ENCODE measurements at regions of chr11 and their contacts with region 1.

Region 1: DNA sequence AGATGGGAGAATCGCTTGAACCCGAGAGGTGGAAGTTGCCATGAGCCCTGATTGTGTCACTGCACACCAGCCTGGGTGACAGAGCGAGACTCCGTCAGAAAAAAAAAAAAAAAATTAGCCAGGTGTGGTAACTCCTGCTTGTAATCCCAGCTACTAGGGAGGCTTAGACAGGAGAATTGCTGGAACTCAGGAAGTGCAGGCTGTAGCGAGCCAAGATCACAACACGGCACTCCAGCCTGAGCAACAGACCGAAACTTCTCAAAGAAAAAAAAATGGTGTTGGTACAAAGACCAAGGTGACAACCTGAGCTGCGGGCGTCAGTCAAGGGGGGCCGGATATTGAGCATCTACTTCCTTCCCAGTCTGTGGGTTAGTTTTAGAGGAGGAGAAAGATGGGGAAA is 48.4 kb upstream of the HSPA8 start:
- DNase-seq: no peak
- ATAC-seq: no peak

Region 2: DNA sequence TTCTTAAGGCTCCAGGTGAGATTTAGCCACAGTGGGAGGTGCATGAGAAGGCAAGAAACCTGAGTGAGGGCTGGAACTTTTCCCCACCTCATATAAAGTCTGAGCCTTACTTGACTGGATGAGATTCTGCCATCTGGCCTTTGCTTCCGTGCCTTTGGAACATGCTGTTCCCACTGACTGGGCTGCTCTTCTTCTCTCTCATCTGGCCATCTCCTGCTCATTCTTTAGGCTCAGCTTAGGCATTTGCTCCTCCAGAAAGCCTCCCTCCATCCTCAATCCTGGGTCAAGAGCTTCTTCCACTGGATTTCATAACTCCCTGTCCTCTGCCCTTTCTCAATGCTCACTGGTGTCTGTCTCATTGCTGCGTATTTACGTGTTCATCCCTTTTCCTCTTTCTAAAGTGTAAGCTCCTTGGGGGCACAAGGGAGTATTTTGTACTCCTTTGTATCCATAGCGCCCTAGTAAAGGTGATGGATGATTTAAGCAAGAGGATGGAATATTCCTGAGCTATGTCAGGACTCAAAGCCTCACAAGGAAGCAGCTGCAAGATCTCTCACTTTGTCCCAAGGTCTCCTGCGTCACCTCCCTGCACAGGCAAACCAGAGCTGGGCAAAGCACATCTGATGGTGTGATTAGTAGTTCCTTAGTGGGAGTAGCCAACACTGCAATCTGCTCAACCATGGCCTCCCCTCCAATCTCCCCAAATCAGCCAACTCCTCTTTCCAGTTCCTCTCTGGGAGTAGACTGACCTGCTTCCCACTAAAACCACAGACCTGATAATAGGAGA is 63.7 kb before region 1 on chr11:
- intact Hi-C with region 1: no loop called
- DNase-seq: no peak
- ATAC-seq: no peak

Region 3: DNA sequence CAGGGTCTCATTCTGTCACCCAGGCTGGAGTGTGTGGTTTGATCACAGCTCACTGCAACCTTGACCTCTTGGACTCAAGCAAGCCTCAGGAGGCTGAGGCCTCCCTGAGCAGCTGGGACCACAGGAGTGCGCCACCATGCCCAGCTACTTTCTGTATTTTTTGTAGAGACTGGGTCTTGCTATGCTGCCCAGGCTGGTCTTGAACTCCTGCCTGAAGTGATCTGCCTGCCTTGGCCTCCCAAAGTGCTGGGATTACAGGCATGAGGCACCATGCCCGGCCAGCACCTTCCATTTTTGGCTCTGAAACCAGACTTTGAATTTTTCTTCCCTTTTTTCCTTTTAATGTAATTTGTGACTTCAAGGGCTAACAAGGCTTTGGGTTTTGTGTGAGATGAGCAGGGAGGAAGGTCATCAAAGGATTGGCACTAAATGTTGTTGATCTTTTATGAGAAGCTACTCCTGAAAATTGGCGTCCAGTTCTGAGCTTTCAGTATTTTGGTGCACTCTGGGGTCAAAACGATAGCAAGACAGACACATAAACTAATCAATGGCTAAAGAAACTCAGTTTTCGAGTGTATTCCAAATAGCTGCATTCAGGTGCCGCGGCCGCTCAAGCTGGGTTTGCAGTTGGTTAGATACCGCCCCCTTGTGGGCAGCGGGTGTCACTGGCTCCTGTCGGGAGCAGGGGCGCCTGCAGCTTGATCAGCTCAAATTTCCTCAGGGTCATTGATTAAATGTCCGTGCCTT is 136.6 kb after region 1 on chr11:
- intact Hi-C with region 1: loop called (anchors 1 kb)
- DNase-seq: peak; percentile 91
- ATAC-seq: peak; percentile 66

Region 4: GRCh38 chr11:123261345-123262106 is 151.2 kb after region 1 on chr11:
- intact Hi-C with region 1: loop called (anchors 5 kb)
- DNase-seq: peak; percentile 88
- ATAC-seq: peak; percentile 89

Measured in Right ventricle myocardium inferior (tissue), 1 donor.